Activated CD4-positive, alpha-beta T cell treated with anti-CD3 and anti-CD28 coated beads, Interleukin-2, amount 10 ng/mL, durations not matched to agents 7 days and 5 days (primary cell): ENCODE measurements at regions of chr1 and their contacts with region 1.

Region 1: GRCh38 chr1:158445376-158445775 is 16.3 kb upstream of the OR10K1 start:
- DNase-seq: no peak
- H3K4me3 Mint-ChIP-seq: no peak overlapping the region
- H3K27ac Mint-ChIP-seq: no peak overlapping the region
- H3K4me1 Mint-ChIP-seq: no peaks in the 10 kb centered on the region
- H3K27me3 Mint-ChIP-seq: peaks cover 2% of the 10 kb centered on the region

Region 2: GRCh38 chr1:158434741-158435140 is 10.6 kb before region 1 on chr1:
- CTCF ChIA-PET with region 1: no interaction called
- POLR2A ChIA-PET with region 1: no interaction called
- DNase-seq: no peak
- H3K4me3 Mint-ChIP-seq: no peak overlapping the region
- H3K27ac Mint-ChIP-seq: no peak overlapping the region
- H3K4me1 Mint-ChIP-seq: no peaks in the 10 kb centered on the region
- H3K27me3 Mint-ChIP-seq: peaks cover 17% of the 10 kb centered on the region

Region 3: DNA sequence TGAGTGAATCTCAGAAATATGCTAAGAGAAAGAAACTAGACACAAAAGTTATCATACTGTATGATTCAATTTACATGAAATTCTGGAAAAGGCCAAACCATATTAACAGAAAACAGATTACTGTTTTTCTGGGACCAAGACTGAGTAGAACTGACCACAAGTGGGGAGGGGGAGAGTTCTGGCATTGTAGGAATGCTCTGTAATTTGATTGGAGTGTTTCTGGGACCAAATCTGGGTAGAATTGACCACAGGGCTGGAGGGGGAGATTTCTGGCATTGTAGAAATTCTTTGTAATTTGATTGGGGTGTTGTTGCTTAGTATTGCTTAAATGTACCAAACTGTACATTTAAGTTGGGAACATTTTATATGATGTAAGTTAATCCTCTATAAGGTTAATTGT is 12.9 kb after region 1 on chr1:
- CTCF ChIA-PET with region 1: no interaction called
- POLR2A ChIA-PET with region 1: no interaction called
- DNase-seq: no peak
- H3K4me3 Mint-ChIP-seq: no peak overlapping the region
- H3K27ac Mint-ChIP-seq: no peak overlapping the region
- H3K4me1 Mint-ChIP-seq: no peaks in the 10 kb centered on the region
- H3K27me3 Mint-ChIP-seq: peaks cover 5% of the 10 kb centered on the region

Region 4: DNA sequence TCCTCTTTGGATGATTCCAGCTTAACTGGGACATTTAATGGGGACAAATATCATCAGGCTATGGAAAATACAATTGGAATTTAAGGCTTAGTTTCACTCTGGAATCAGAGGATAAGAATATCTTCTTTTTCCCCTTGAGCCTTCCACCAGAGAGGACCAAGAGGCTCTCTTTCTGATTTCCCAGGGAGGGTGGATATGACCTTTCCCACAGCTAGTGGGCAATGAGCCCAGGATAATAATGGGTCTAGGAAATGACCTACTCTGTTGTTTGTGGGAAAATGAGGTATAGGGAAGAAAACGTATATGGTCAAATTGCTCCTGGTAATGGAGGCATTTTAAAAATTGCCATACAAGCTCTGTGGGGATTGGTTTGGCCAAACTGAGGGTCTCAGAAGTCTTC is 106.9 kb after region 1 on chr1:
- CTCF ChIA-PET with region 1: no interaction called
- POLR2A ChIA-PET with region 1: no interaction called
- DNase-seq: no peak
- H3K4me3 Mint-ChIP-seq: no peak overlapping the region
- H3K27ac Mint-ChIP-seq: no peak overlapping the region
- H3K4me1 Mint-ChIP-seq: no peaks in the 10 kb centered on the region
- H3K27me3 Mint-ChIP-seq: peaks cover 10% of the 10 kb centered on the region

Region 5: DNA sequence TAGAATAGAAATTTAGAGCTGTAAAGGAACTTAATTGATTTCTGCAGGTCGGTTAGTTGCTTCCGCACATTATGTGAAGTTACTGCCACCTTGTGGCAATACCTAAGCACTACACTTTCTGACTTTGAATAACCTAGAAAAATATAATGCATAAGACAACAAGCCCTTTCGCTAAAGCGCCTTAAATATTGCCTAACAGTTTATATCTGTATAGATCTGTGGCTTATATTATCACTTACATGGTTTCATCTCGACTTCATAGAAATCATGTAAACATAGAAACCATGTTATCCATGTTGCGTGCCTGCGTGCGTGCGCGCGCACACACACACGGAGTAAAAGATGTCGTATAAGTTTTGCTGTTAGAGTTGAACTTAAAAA is 553.4 kb after region 1 on chr1:
- CTCF ChIA-PET with region 1: no interaction called
- POLR2A ChIA-PET with region 1: interaction called, 11 read pairs
- DNase-seq: peak; percentile 71
- H3K4me3 Mint-ChIP-seq: no peak overlapping the region
- H3K27ac Mint-ChIP-seq: peak overlapping the region; percentile 72
- H3K4me1 Mint-ChIP-seq: peaks cover 31% of the 10 kb centered on the region
- H3K27me3 Mint-ChIP-seq: no peaks in the 10 kb centered on the region